PC-3 (cell line): ENCODE measurements at regions of chr5 and their contacts with region 1.

Region 1: DNA sequence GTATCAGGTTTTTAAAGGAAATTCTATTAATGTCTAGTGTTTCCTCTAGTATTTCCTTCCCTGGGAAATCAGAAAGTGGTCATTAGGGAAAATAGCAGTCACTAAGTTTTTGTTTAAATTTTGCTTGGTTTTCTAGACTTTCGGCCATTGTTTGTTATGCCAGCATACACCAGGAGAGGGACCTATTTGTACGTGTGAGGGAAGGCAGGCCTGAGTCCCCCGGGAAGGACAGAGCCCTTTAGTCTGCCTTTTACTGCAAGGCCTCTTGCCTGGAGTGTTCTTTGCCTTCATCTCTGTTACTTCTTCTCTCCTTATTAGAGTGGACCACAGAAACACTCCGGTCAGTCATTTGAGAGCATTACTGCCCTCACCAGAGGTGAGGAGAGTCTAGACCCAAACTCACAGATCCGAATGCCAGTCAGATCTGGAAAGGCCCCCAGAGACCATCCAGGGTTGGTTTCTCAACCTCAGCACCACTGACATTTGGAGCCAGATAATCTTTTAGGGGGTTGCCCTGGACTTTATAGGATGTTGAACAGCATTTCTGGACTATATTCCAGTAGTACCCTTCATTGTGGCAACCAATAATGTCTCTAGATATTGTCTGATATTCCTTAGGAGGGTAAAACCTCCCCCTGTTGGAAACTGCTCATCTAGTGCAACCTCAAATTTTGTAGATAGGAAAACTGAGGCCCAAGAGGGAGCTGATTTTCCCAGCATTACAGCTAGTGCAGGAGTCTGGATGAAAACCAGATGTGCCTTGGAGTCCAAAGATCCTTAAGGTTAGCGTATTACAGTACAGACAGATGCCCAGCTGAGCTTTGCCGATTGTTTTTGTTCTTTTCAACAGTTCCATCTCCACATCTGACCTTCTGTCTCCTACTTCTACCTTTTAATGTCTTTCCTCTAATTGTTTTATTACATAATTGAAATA is 93.0 kb upstream of the NIPAL4 start:
- DNase-seq: peak; percentile 86
- ATAC-seq: peak; percentile 72
- H3K4me3 ChIP-seq: no peak overlapping the region
- H3K27ac ChIP-seq: 0 out of 2 replicates have a peak overlapping the region, but pooled peaks have one; percentile 1
- H3K4me1 ChIP-seq: peaks cover 33% of the 10 kb centered on the region
- H3K27me3 ChIP-seq: no peaks in the 10 kb centered on the region
- CTCF ChIP-seq: peak; percentile 98

Region 2: DNA sequence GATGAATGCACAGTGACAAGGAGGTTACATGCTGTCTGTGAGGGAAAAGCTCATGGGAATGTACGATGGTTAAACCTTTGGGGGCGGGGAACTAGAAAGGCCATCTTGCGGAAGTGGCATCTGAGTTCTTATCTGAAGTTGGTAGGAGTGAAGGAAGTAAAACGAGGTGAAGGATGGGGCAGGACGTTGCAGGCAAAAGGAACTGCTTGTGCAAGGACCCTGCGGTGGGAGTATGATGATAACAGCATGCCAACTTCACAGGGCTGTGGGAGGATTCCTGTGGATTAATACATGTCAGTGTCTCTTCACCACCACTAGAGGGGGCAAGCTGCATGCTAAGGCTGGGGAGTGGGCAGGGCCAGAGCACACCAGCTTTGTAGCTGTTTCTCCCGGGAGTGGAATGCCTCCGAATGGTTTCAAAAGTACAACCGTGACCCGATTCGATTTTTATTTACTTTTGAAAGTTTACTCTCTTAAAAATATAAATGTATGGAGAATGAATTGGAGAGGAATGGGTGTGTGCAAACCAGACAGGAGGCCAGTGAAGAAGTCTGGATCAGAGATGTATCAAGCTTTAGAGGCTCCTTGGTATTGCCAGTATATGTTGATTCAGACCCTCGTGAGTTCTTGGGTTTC is 38.6 kb before region 1 on chr5:
- CTCF ChIA-PET with region 1: interaction called, 3 read pairs
- POLR2A ChIA-PET with region 1: no interaction called
- intact Hi-C with region 1: loop called (anchors 1 kb)
- DNase-seq: peak; percentile 90
- ATAC-seq: peak; percentile 100
- H3K4me3 ChIP-seq: peak overlapping the region; percentile 61
- H3K27ac ChIP-seq: no peak overlapping the region
- H3K4me1 ChIP-seq: peaks cover 13% of the 10 kb centered on the region
- H3K27me3 ChIP-seq: no peaks in the 10 kb centered on the region
- CTCF ChIP-seq: peak; percentile 99

Region 3: DNA sequence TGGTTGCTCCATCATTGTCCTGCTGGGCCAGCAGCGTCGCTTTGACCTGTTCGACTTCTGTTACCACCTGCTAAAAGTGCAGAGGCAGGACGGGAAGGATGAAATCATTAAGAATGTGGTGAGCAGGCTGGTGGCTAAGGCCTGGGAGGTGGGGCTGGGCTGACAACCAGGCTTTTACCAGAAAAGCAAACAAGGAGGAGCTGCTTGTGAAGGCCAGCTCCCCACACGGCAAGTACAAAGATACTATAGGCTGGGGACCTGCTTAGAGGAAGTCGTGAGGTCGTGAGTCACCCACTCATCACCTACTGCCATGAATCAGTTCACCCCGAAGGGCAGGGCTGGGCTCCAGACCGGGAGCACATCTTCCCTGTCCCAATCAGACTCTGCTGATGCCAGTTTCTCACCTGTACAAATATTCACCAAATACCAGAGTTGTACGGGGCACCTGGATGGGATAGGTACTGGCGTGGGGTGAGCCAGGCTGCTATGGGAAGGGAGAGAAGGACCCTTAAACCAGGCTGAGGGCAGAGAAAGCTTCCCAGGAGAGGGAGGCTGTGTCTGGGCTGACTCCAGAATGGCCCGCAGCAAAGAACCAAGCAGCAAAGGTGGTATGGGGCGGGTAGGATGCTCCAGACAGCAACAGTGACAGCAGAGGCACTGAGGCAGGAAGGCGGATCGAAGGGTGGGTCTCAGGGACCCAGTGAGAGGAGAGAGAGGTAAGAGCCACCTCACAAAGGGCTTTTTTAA is 23.7 kb after region 1 on chr5:
- CTCF ChIA-PET with region 1: interaction called, 4 read pairs
- POLR2A ChIA-PET with region 1: interaction called, 3 read pairs
- intact Hi-C with region 1: loop called (anchors 1 kb)
- DNase-seq: peak; percentile 100
- ATAC-seq: peak; percentile 93
- H3K4me3 ChIP-seq: peak overlapping the region; percentile 30
- H3K27ac ChIP-seq: peak overlapping the region; percentile 87
- H3K4me1 ChIP-seq: peaks cover 59% of the 10 kb centered on the region
- H3K27me3 ChIP-seq: no peaks in the 10 kb centered on the region
- CTCF ChIP-seq: no peak

Region 4: GRCh38 chr5:157476702-157477408 is 109.8 kb after region 1 on chr5:
- CTCF ChIA-PET with region 1: interaction called, 5 read pairs
- POLR2A ChIA-PET with region 1: no interaction called
- intact Hi-C with region 1: loop called (anchors 1 kb)
- DNase-seq: peak; percentile 91
- ATAC-seq: peak; percentile 41
- H3K4me3 ChIP-seq: no peak overlapping the region
- H3K27ac ChIP-seq: no peak overlapping the region
- H3K4me1 ChIP-seq: peaks cover 36% of the 10 kb centered on the region
- H3K27me3 ChIP-seq: no peaks in the 10 kb centered on the region
- CTCF ChIP-seq: peak; percentile 99

Region 5: GRCh38 chr5:157718519-157718918 is 351.5 kb after region 1 on chr5:
- CTCF ChIA-PET with region 1: no interaction called
- POLR2A ChIA-PET with region 1: no interaction called
- intact Hi-C with region 1: loop called (anchors 1 kb)
- DNase-seq: peak; percentile 92
- ATAC-seq: peak; percentile 97
- H3K4me3 ChIP-seq: no peak overlapping the region
- H3K27ac ChIP-seq: peak overlapping the region; percentile 58
- H3K4me1 ChIP-seq: peaks cover 20% of the 10 kb centered on the region
- H3K27me3 ChIP-seq: no peaks in the 10 kb centered on the region
- CTCF ChIP-seq: peak; percentile 90